Heart left ventricle (tissue), 16 donors: ENCODE measurements at regions of chr16 and their contacts with region 1.

Region 1: GRCh38 chr16:87278191-87279095 is 38.7 kb downstream of the C16orf95 start:
- DNase-seq: peak; percentile 67 to 85 (median 75)
- ATAC-seq: peak; percentile 89 to 97 (median 94)
- H3K4me3 ChIP-seq: no peak overlapping the region
- H3K27ac ChIP-seq: no peak overlapping the region
- H3K4me1 ChIP-seq: peaks cover 0 to 3% (median 0%) of the 10 kb centered on the region in 12 donors
- H3K27me3 ChIP-seq: peaks cover 0 to 12% (median 0%) of the 10 kb centered on the region in 9 donors
- CTCF ChIP-seq: peak; percentile 68 to 93 (median 86)
- POLR2A ChIP-seq: no peak

Region 2: GRCh38 chr16:87067836-87068761 is 210.3 kb before region 1 on chr16:
- intact Hi-C with region 1: loop called (anchors 2 to 10 kb)
- DNase-seq: no peak
- ATAC-seq: no peak
- H3K4me3 ChIP-seq: no peak overlapping the region
- H3K27ac ChIP-seq: no peak overlapping the region
- H3K4me1 ChIP-seq: no peaks in the 10 kb centered on the region
- H3K27me3 ChIP-seq: peaks cover 0 to 29% (median 17%) of the 10 kb centered on the region in 9 donors
- CTCF ChIP-seq: no peak
- POLR2A ChIP-seq: no peak

Region 3: GRCh38 chr16:87203060-87203656 is 75.3 kb before region 1 on chr16:
- intact Hi-C with region 1: loop called in 5 of 10 experiments (anchors 2 to 10 kb)
- DNase-seq: peak in 4 of 5 donors; percentile 32 to 62 (median 42)
- ATAC-seq: peak; percentile 35 to 57 (median 48)
- H3K4me3 ChIP-seq: no peak overlapping the region
- H3K27ac ChIP-seq: peak overlapping the region in 1 of 12 donors; percentile 13
- H3K4me1 ChIP-seq: peaks cover 0 to 12% (median 2%) of the 10 kb centered on the region in 12 donors
- H3K27me3 ChIP-seq: peaks cover 0 to 11% (median 0%) of the 10 kb centered on the region in 9 donors
- CTCF ChIP-seq: peak; percentile 49 to 78 (median 63)
- POLR2A ChIP-seq: no peak

Region 4: DNA sequence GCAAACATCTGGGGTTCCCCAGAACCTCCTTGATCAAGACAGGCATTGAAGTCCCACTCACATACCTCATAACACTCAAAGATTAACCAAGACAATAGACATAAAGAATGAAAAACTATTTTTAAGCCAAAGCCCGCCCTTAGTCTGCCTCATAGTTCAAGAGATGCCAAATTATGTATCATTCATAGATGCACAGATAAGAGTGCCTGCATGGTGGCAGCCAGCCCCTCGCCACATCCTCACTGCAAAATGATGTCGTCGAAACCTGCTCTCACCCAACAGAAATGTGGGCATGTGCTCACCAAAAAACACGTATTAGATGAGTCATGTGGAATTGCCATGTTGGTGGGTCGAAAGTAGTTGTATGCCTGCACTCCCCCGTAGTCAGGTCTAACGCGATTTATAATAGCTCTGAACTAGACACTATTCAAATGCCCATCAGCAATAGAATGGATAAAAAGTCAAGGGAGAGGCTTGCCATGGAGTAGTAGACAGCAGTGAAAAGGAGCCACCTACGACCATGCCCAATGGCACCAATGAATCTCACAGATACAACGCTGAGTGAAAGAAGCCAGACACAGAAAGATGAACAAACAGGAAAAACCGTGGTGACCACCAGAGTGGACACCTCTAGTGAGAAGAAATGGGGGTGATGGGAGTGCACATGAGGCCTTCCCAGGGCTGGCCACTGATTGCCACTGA is 26.0 kb before region 1 on chr16:
- intact Hi-C with region 1: no loop called
- DNase-seq: no peak
- ATAC-seq: no peak
- H3K4me3 ChIP-seq: no peak overlapping the region
- H3K27ac ChIP-seq: no peak overlapping the region
- H3K4me1 ChIP-seq: no peaks in the 10 kb centered on the region
- H3K27me3 ChIP-seq: no peaks in the 10 kb centered on the region
- CTCF ChIP-seq: no peak
- POLR2A ChIP-seq: no peak